T-cell (primary cell): ENCODE measurements at regions of chr6 and their contacts with region 1.

Region 1: DNA sequence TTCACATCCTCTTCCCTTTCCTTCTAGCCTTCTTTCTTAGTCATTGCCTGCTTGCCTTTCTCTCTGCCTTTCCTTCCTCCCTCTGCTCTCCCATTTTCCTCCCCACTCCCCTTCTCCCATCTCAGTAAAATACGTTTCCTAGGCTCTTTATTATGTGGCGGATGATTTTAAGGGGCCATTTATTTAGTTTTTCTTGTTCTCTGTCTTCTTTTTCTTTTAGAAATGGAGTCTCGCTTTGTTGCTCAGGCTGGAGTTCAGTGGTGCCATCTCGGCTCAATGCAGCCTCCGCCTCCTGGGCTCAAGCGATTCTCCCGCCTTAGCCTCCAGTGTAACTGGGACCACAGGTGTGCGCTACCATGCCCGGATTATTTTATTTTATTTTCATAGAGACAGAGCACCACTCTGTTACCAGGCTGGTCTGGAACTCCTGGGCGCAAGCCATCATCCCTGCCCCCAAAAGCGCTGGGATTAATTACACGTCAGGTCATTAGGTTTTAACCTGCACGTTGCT is 1.5 kb downstream of the MTHFD1L start:
- DNase-seq: no peak
- ATAC-seq: no peak
- H3K4me3 ChIP-seq: peak overlapping the region; percentile 57 to 71
- H3K4me3 Mint-ChIP-seq: peak overlapping the region; percentile 86 to 92 (median 86)
- H3K27ac ChIP-seq: no peak overlapping the region
- H3K27ac Mint-ChIP-seq: peak overlapping the region; percentile 50 to 64
- H3K4me1 ChIP-seq: peaks cover 5 to 11% of the 10 kb centered on the region in 2 experiments
- H3K4me1 Mint-ChIP-seq: peaks cover 12 to 13% (median 13%) of the 10 kb centered on the region in 3 donors
- H3K27me3 ChIP-seq: peaks cover 0 to 5% of the 10 kb centered on the region in 2 experiments
- H3K27me3 Mint-ChIP-seq: peaks cover 9% of the 10 kb centered on the region in 2 donors

Region 2: DNA sequence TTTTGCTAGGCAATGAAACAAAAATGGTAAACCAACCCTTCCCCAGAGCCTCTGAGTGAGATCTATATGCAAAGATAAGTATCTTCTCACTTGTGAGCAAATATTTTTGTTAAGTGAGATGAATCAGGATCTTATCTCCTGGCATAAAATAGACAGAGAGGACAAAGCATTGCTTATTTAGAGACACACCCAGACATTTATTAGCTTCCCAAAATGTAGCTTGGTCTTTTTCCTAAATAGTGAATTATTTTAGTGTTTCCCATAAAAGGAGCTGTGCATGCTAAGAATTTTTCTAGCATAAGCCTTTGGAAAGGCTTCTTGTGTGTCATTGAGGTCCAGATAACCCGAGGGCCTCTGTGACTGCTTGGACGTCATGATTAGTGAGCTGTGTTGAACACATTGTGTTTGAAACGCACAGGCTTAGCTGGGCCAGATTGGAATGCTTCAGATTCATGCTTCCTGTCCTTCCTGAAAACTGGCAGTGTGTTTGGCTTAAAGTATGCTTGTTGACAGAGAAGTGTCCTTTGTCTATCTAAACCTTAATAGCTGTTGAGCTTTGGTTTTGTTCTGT is 14.9 kb after region 1 on chr6:
- CTCF ChIA-PET with region 1: interaction called in 1 of 2 experiments, 3 read pairs
- POLR2A ChIA-PET with region 1: interaction called, 9 to 12 read pairs
- DNase-seq: no peak
- ATAC-seq: no peak
- H3K4me3 ChIP-seq: no peak overlapping the region
- H3K4me3 Mint-ChIP-seq: no peak overlapping the region
- H3K27ac ChIP-seq: no peak overlapping the region
- H3K27ac Mint-ChIP-seq: no peak overlapping the region
- H3K4me1 ChIP-seq: no peaks in the 10 kb centered on the region
- H3K4me1 Mint-ChIP-seq: no peaks in the 10 kb centered on the region
- H3K27me3 ChIP-seq: no peaks in the 10 kb centered on the region
- H3K27me3 Mint-ChIP-seq: no peaks in the 10 kb centered on the region

Region 3: GRCh38 chr6:152160346-152160745 is 1293.3 kb after region 1 on chr6:
- CTCF ChIA-PET with region 1: interaction called in 1 of 2 experiments, 10 read pairs
- POLR2A ChIA-PET with region 1: no interaction called
- DNase-seq: peak in 1 of 35 experiments; percentile 46
- ATAC-seq: peak in 3 of 4 experiments; percentile 24 to 47 (median 40)
- H3K4me3 ChIP-seq: no peak overlapping the region
- H3K4me3 Mint-ChIP-seq: no peak overlapping the region
- H3K27ac ChIP-seq: no peak overlapping the region
- H3K27ac Mint-ChIP-seq: peak overlapping the region; percentile 52 to 57
- H3K4me1 ChIP-seq: peaks cover 0 to 4% of the 10 kb centered on the region in 2 experiments
- H3K4me1 Mint-ChIP-seq: peaks cover 11 to 25% (median 18%) of the 10 kb centered on the region in 3 donors
- H3K27me3 ChIP-seq: no peaks in the 10 kb centered on the region
- H3K27me3 Mint-ChIP-seq: no peaks in the 10 kb centered on the region